ENCODE measurements at regions of chr5 and their contacts with region 1.

Region 1: GRCh38 chr5:121968910-121969607 is 7.3 kb downstream of the SRFBP1 start:
- DNase-seq: no peak
- H3K4me3 ChIP-seq: no peak overlapping the region
- H3K27ac ChIP-seq: peak overlapping the region in 2 of 59 donors; percentile 16 to 46
- H3K27me3 ChIP-seq: no peaks in the 10 kb centered on the region
- CTCF ChIP-seq: no peak

Region 2: GRCh38 chr5:122078116-122079110 is 109.4 kb after region 1 on chr5 and contains the start of gene LOX:
- intact Hi-C with region 1: loop called in 1 of 2 experiments (anchors 2 kb)
- DNase-seq: peak in 3 of 10 donors; percentile 14 to 41 (median 30)
- H3K4me3 ChIP-seq: peak within 1 kb of the TSS; percentile 46 to 83 (median 64)
- H3K27ac ChIP-seq: peak within 1 kb of the TSS in 4 of 59 donors; percentile 19 to 56 (median 40)
- H3K27me3 ChIP-seq: peaks cover 0 to 11% (median 0%) of the 10 kb centered on the region in 45 donors
- CTCF ChIP-seq: no peak
- total RNA-seq, gene LOX: 0.18 to 4.1 (median 0.91) TPM in 118 of 120 experiments, not detected in the others

Region 3: DNA sequence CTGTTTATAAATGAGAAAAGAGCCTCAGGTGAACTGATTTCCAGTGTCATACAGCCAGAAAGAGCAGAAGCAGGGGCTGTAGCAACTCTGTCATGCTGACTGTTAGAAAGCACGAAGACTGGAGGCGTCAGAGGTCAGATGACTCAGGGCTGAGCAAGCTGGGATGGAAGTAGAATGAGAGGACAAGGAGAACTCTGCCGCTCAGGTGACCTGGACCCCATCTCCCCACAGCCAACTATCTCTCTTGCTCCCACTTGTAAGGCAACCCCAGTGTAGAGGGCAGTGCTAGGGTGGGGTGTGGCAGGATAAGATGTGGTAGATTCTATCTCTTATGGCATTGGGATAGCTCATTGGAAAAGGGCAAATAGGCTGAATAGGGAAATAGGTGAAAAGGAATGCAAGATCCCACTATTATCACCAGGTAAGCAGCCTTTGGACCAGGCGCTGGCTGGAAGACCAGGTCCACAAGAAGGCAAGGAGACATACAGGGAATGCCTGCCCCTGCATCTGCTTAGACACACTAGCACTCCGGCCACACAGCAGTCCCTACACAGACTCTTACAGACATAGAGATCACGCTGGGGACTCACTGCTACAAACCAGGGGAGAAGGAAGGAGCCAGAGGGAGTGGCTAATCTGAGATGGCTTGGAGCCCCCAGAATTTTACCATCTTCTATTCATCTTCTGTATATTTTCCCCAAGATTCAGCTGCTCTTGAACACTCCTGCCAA is 130.2 kb after region 1 on chr5:
- intact Hi-C with region 1: loop called (anchors 5 to 10 kb)
- DNase-seq: no peak
- H3K4me3 ChIP-seq: no peak overlapping the region
- H3K27ac ChIP-seq: no peak overlapping the region
- H3K27me3 ChIP-seq: no peaks in the 10 kb centered on the region
- CTCF ChIP-seq: no peak

Region 4: DNA sequence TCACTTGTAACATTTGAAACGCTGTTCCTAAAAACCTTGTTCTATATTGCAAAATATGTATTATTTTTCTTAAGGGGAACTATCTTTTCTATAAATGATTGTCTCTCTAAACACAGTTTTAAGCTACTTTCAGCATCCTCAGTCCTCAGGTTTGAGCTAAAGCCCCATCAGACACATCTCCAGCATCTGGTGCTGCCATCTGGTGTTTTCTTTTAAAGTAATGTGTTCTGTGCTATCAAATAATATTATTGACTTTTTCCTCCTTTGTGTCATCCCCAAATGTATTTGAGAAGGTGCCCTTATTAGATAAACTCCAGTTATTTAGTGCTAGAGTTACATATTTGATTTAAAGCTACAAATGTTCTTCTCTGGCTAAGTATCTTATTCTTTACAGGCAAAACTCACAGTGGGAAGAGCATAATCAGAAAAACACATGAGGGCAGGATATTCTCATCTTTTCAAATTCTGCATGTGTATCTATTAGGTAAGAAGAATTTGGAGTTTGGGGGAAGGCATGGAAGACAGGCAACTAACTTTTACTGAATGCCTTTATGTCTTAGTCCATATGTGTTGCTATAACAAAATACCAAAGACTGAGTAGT is 187.8 kb after region 1 on chr5:
- intact Hi-C with region 1: loop called in 1 of 2 experiments (anchors 10 kb)
- DNase-seq: no peak
- H3K4me3 ChIP-seq: no peak overlapping the region
- H3K27ac ChIP-seq: no peak overlapping the region
- H3K27me3 ChIP-seq: no peaks in the 10 kb centered on the region
- CTCF ChIP-seq: peak in 55 of 56 donors; percentile 25 to 75 (median 51)